CD4-positive, alpha-beta T cell (primary cell): ENCODE measurements at regions of chr1 and their contacts with region 1.

Region 1: GRCh38 chr1:111203681-111204200 is 3.3 kb upstream of the DENND2D start:
- DNase-seq: peak; percentile 52 to 93 (median 84)
- ATAC-seq: peak; percentile 39
- H3K4me3 ChIP-seq: peak overlapping the region; percentile 79
- H3K4me3 Mint-ChIP-seq: peak overlapping the region; percentile 99
- H3K27ac ChIP-seq: peak overlapping the region; percentile 70 to 97
- H3K27ac Mint-ChIP-seq: peak overlapping the region; percentile 90
- H3K4me1 ChIP-seq: peaks cover 50% of the 10 kb centered on the region
- H3K4me1 Mint-ChIP-seq: peaks cover 83% of the 10 kb centered on the region
- H3K27me3 ChIP-seq: no peaks in the 10 kb centered on the region
- H3K27me3 Mint-ChIP-seq: no peaks in the 10 kb centered on the region
- CTCF ChIP-seq: no peak

Region 2: GRCh38 chr1:111214074-111214801 is 10.5 kb after region 1 on chr1:
- CTCF ChIA-PET with region 1: interaction called, 135 read pairs
- POLR2A ChIA-PET with region 1: interaction called, 756 read pairs
- intact Hi-C with region 1: loop called in 1 of 2 experiments (anchors 1 kb)
- DNase-seq: peak in 1 of 14 experiments; percentile 12
- ATAC-seq: no peak
- H3K4me3 ChIP-seq: no peak overlapping the region
- H3K4me3 Mint-ChIP-seq: peak overlapping the region; percentile 80
- H3K27ac ChIP-seq: peak overlapping the region; percentile 76 to 88
- H3K27ac Mint-ChIP-seq: peak overlapping the region; percentile 98
- H3K4me1 ChIP-seq: peaks cover 69% of the 10 kb centered on the region
- H3K4me1 Mint-ChIP-seq: peaks cover 94% of the 10 kb centered on the region
- H3K27me3 ChIP-seq: no peaks in the 10 kb centered on the region
- H3K27me3 Mint-ChIP-seq: peaks cover 5% of the 10 kb centered on the region
- CTCF ChIP-seq: no peak